GM12878 (cell line): ENCODE measurements at regions of chr12 and their contacts with region 1.

Region 1: GRCh38 chr12:43069768-43070221 is 480.2 kb upstream of the PRICKLE1 start:
- DNase-seq: peak; percentile 3
- ATAC-seq: peak; percentile 80
- H3K4me3 ChIP-seq: no peak overlapping the region
- H3K27ac ChIP-seq: no peak overlapping the region
- H3K4me1 ChIP-seq: no peaks in the 10 kb centered on the region
- H3K27me3 ChIP-seq: no peaks in the 10 kb centered on the region
- CTCF ChIP-seq: no peak
- EP300 ChIP-seq: no peak
- POLR2A ChIP-seq: no peak
- RAD21 ChIP-seq: no peak

Region 2: GRCh38 chr12:43113135-43113534 is 43.3 kb after region 1 on chr12:
- CTCF ChIA-PET with region 1: no interaction called
- POLR2A ChIA-PET with region 1: interaction called, 11 read pairs
- RAD21 ChIA-PET with region 1: no interaction called
- SMC1A ChIA-PET with region 1: no interaction called
- in situ Hi-C with region 1: no loop called
- intact Hi-C with region 1: no loop called
- DNase-seq: no peak
- ATAC-seq: no peak
- H3K4me3 ChIP-seq: no peak overlapping the region
- H3K27ac ChIP-seq: no peak overlapping the region
- H3K4me1 ChIP-seq: no peaks in the 10 kb centered on the region
- H3K27me3 ChIP-seq: no peaks in the 10 kb centered on the region
- CTCF ChIP-seq: 0 out of 6 replicates have a peak, but pooled peaks of 1 of the 3 experiments have one; percentile 2
- EP300 ChIP-seq: no peak
- POLR2A ChIP-seq: no peak
- RAD21 ChIP-seq: no peak